Activated B cell treated with CpG ODN at 0.5 μM for 24 hours (primary cell): ENCODE measurements at regions of chr13 and their contacts with region 1.

Region 1: GRCh38 chr13:28138012-28138755 is at the start of gene PAN3:
- DNase-seq: peak; percentile 95
- ATAC-seq: peak; percentile 67
- H3K4me3 Mint-ChIP-seq: peak within 1 kb of the TSS; percentile 95
- H3K27ac Mint-ChIP-seq: peak within 1 kb of the TSS; percentile 98
- H3K4me1 Mint-ChIP-seq: peaks cover 53% of the 10 kb centered on the region
- H3K27me3 Mint-ChIP-seq: no peaks in the 10 kb centered on the region
- CTCF ChIP-seq: no peak
- total RNA-seq, gene PAN3: 60.7 and 68.2 TPM in 2 replicates

Region 2: GRCh38 chr13:27171827-27172494 is 966.2 kb before region 1 on chr13:
- CTCF ChIA-PET with region 1: no interaction called
- POLR2A ChIA-PET with region 1: interaction called, 3 read pairs
- intact Hi-C with region 1: loop called (anchors 5 kb)
- DNase-seq: peak; percentile 94
- ATAC-seq: peak; percentile 83
- H3K4me3 Mint-ChIP-seq: peak overlapping the region; percentile 91
- H3K27ac Mint-ChIP-seq: peak overlapping the region; percentile 93
- H3K4me1 Mint-ChIP-seq: peaks cover 69% of the 10 kb centered on the region
- H3K27me3 Mint-ChIP-seq: no peaks in the 10 kb centered on the region
- CTCF ChIP-seq: no peak

Region 3: GRCh38 chr13:27449936-27450828 is 688.0 kb before region 1 on chr13 and contains the start of gene MTIF3:
- CTCF ChIA-PET with region 1: no interaction called
- POLR2A ChIA-PET with region 1: interaction called, 7 read pairs
- intact Hi-C with region 1: loop called (anchors 1 kb)
- DNase-seq: peak; percentile 89
- ATAC-seq: peak; percentile 81
- H3K4me3 Mint-ChIP-seq: peak within 1 kb of the TSS; percentile 96
- H3K27ac Mint-ChIP-seq: peak within 1 kb of the TSS; percentile 98
- H3K4me1 Mint-ChIP-seq: peaks cover 69% of the 10 kb centered on the region
- H3K27me3 Mint-ChIP-seq: no peaks in the 10 kb centered on the region
- CTCF ChIP-seq: no peak
- total RNA-seq, gene MTIF3: 39.8 and 50.1 TPM in 2 replicates

Region 4: DNA sequence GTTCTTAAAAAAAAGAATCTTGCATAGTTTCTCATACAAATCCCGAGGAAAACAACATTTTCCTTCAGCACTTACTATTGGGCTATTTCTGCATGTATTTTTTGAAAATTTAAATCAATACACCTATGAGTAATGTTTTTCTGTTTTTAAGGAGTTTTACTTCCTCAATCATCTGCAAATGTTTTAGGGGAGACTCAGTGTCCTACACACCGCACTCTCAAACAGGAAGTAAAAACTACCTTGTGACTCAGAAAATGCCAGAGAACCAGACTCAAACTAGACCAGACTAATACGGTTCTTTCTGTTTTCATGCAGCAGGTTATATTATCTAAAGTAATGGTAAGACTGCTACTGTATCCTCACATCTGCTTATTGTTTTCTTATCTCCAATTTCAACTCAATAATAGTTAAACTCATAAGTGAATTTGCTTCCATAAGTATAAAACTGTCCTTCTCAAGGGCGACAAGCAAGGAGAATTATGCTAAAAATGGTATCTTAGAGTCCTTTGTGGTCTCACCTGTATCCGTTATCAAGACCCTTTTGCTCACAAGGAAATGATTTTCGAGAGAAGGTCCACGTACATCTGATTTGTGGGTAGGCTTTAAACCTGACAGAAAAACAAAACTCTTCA is 90.3 kb before region 1 on chr13:
- CTCF ChIA-PET with region 1: no interaction called
- POLR2A ChIA-PET with region 1: interaction called, 22 read pairs
- intact Hi-C with region 1: loop called (anchors 1 kb)
- DNase-seq: no peak
- ATAC-seq: peak; percentile 92
- H3K4me3 Mint-ChIP-seq: peak overlapping the region; percentile 72
- H3K27ac Mint-ChIP-seq: peak overlapping the region; percentile 93
- H3K4me1 Mint-ChIP-seq: peaks cover 69% of the 10 kb centered on the region
- H3K27me3 Mint-ChIP-seq: no peaks in the 10 kb centered on the region
- CTCF ChIP-seq: no peak

Region 5: GRCh38 chr13:28181413-28181812 is 43.2 kb after region 1 on chr13:
- CTCF ChIA-PET with region 1: no interaction called
- POLR2A ChIA-PET with region 1: interaction called, 13 read pairs
- intact Hi-C with region 1: no loop called
- DNase-seq: no peak
- ATAC-seq: no peak
- H3K4me3 Mint-ChIP-seq: no peak overlapping the region
- H3K27ac Mint-ChIP-seq: no peak overlapping the region
- H3K4me1 Mint-ChIP-seq: peaks cover 27% of the 10 kb centered on the region
- H3K27me3 Mint-ChIP-seq: no peaks in the 10 kb centered on the region
- CTCF ChIP-seq: no peak

Region 6: GRCh38 chr13:28636674-28637317 is 498.6 kb after region 1 on chr13:
- CTCF ChIA-PET with region 1: no interaction called
- POLR2A ChIA-PET with region 1: no interaction called
- intact Hi-C with region 1: loop called (anchors 2 kb)
- DNase-seq: no peak
- ATAC-seq: peak; percentile 74
- H3K4me3 Mint-ChIP-seq: peak overlapping the region; percentile 66
- H3K27ac Mint-ChIP-seq: peak overlapping the region; percentile 74
- H3K4me1 Mint-ChIP-seq: peaks cover 36% of the 10 kb centered on the region
- H3K27me3 Mint-ChIP-seq: no peaks in the 10 kb centered on the region
- CTCF ChIP-seq: no peak

Region 7: GRCh38 chr13:29595380-29596063 is 1457.3 kb after region 1 on chr13 and contains the start of gene SLC7A1:
- CTCF ChIA-PET with region 1: no interaction called
- POLR2A ChIA-PET with region 1: no interaction called
- intact Hi-C with region 1: loop called (anchors 10 kb)
- DNase-seq: peak; percentile 82
- ATAC-seq: peak; percentile 87
- H3K4me3 Mint-ChIP-seq: peak within 1 kb of the TSS; percentile 91
- H3K27ac Mint-ChIP-seq: peak within 1 kb of the TSS; percentile 88
- H3K4me1 Mint-ChIP-seq: peaks cover 33% of the 10 kb centered on the region
- H3K27me3 Mint-ChIP-seq: peaks cover 1% of the 10 kb centered on the region
- CTCF ChIP-seq: no peak
- total RNA-seq, gene SLC7A1: 83.5 and 85.0 TPM in 2 replicates